SK-N-SH (cell line): ENCODE measurements at regions of chr3 and their contacts with region 1.

Region 1: DNA sequence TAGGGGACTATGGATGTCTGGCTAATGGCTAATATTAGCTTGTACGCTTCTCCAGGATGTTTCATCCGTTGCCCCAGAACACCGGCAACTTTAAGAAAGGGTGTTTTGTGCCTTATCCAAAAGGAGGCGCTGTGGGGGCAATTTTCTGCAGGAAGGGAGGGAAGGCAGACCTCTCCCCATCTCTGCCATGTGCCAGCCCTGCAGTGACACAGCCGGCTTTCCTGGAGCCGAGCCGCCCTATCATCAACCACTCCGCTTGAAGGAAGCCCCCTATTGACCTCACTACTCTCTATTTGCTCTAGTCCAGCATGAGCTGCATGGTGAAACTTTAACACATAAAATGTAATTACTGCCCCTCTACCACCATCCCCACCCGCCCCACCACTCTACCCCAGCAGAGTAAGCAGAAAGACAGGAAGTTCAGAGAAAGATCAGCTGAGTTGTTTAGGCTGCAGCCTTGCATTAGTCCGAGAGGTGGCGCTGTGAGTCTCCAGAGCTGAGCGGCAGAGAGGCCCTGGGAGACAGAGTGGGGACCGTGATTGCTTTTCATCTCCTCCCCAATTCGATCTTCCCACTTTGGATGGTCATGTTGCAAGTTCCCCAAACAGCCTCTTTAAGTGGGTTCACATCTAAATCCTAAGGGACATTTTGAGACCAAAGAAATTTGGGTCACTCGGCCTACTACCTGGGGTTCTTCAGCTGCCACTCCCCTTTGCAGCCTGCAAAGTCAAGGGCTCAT is 24.5 kb upstream of the RAD18 start:
- DNase-seq: peak; percentile 91
- H3K4me3 ChIP-seq: no peak overlapping the region; a peak in 1 of 4 replicates
- H3K27ac ChIP-seq: no peak overlapping the region
- H3K4me1 ChIP-seq: peaks cover 0 to 4% of the 10 kb centered on the region in 2 experiments; a peak in 1 of 4 replicates
- H3K27me3 ChIP-seq: no peaks in the 10 kb centered on the region
- CTCF ChIP-seq: peak; percentile 74
- EP300 ChIP-seq: no peak
- RAD21 ChIP-seq: peak; percentile 85

Region 2: GRCh38 chr3:8970971-8971589 is 16.7 kb before region 1 on chr3:
- CTCF ChIA-PET with region 1: interaction called, 151 read pairs
- POLR2A ChIA-PET with region 1: no interaction called
- DNase-seq: peak; percentile 69
- H3K4me3 ChIP-seq: peak overlapping the region in 1 of 2 experiments; percentile 13; a peak in 1 of 4 replicates
- H3K27ac ChIP-seq: no peak overlapping the region
- H3K4me1 ChIP-seq: peaks cover 0 to 4% of the 10 kb centered on the region in 2 experiments; a peak in 1 of 4 replicates
- H3K27me3 ChIP-seq: no peaks in the 10 kb centered on the region
- CTCF ChIP-seq: peak; percentile 98
- EP300 ChIP-seq: no peak
- RAD21 ChIP-seq: peak; percentile 97

Region 3: GRCh38 chr3:9028134-9028533 is 40.3 kb after region 1 on chr3:
- CTCF ChIA-PET with region 1: interaction called, 11 read pairs
- POLR2A ChIA-PET with region 1: no interaction called
- DNase-seq: peak; percentile 72
- H3K4me3 ChIP-seq: no peak overlapping the region
- H3K27ac ChIP-seq: peak overlapping the region in 1 of 2 experiments; percentile 71; a peak in 2 of 4 replicates
- H3K4me1 ChIP-seq: peaks cover 0 to 23% of the 10 kb centered on the region in 2 experiments; a peak in 1 of 4 replicates
- H3K27me3 ChIP-seq: no peaks in the 10 kb centered on the region
- CTCF ChIP-seq: no peak
- EP300 ChIP-seq: peak in 1 of 2 experiments; percentile 67; a peak in 2 of 4 replicates
- RAD21 ChIP-seq: no peak

Region 4: GRCh38 chr3:9067352-9067975 is 79.7 kb after region 1 on chr3:
- CTCF ChIA-PET with region 1: interaction called, 150 read pairs
- POLR2A ChIA-PET with region 1: no interaction called
- DNase-seq: peak; percentile 69
- H3K4me3 ChIP-seq: peak overlapping the region in 1 of 2 experiments; percentile 26; a peak in 1 of 4 replicates
- H3K27ac ChIP-seq: no peak overlapping the region
- H3K4me1 ChIP-seq: no peaks in the 10 kb centered on the region; a peak in 1 of 4 replicates
- H3K27me3 ChIP-seq: no peaks in the 10 kb centered on the region
- CTCF ChIP-seq: peak; percentile 91
- EP300 ChIP-seq: no peak
- RAD21 ChIP-seq: peak; percentile 98

Region 5: DNA sequence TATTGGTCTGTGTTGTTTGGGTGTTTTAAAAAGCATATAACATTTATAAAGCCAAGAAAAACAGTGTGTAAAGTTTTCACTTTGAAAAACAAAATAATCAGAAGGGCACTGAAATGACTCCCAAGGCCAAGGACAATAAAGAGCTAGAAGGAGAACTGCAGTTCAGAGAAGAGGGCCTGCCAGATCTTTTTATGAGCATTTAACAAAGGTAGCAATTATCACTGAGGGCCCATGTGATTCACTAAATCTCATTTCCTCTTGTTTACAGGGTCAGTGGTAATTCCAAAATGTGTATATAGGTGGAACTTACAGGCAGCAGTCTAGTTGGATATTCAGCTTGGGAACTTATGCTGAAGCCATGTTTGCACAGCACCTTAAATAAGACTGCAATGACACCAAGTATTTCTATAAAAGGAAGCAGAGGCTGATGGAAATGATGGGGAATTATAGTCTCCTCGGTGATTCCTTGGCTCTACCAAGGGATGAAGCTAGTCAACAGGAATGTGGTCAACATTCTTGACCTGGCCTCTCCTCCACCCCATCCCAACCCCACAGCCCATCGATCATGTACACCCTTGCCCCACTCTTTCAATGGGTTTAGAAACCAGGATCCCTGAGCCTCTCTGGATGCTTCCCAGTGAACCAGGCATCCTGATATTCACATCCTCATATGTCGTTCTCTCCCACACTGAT is 320.6 kb after region 1 on chr3:
- CTCF ChIA-PET with region 1: interaction called, 112 read pairs
- POLR2A ChIA-PET with region 1: no interaction called
- DNase-seq: no peak
- H3K4me3 ChIP-seq: no peak overlapping the region
- H3K27ac ChIP-seq: no peak overlapping the region
- H3K4me1 ChIP-seq: no peaks in the 10 kb centered on the region
- H3K27me3 ChIP-seq: no peaks in the 10 kb centered on the region
- CTCF ChIP-seq: no peak
- EP300 ChIP-seq: no peak
- RAD21 ChIP-seq: no peak